H1 (cell line): ENCODE measurements at regions of chr4 and their contacts with region 1.

Region 1: DNA sequence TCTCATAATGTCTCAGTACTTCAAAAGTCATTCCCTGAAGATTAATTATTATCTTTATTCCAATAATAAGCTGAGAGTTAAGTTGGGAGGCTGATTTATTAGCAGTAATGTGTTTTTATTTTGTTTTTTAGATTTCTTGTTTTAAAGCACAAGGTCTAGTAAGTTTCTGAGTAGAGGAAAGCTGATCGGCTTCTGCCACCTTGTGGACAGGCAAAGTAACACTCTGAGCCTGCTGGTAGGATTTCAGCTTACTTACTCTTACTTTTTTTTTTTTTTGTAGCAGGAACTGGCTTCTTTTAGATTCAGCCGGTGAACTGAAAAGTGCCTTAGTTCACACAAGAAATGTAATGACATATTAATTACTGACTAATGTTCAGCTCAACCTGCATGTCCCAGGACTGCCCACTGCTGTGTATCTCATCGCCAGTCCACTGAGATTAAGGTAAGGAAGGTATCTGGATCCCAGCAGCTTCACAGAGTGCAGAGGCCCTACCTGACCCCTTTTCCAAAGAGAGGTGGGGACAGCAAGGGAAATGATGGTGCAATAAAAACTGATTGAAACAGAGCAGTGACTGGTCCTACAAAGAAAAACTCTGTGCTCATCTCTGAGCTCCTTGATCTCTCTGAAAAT is 126.5 kb downstream of the ADGRA3 start:
- DNase-seq: peak in 1 of 2 experiments; percentile 27
- H3K4me3 ChIP-seq: no peak overlapping the region
- H3K27ac ChIP-seq: no peak overlapping the region
- H3K4me1 ChIP-seq: no peaks in the 10 kb centered on the region
- H3K27me3 ChIP-seq: no peaks in the 10 kb centered on the region
- CTCF ChIP-seq: peak in 2 of 3 experiments; percentile 71 to 82; a peak in 3 of 4 replicates
- EP300 ChIP-seq: no peak
- POLR2A ChIP-seq: no peak
- RAD21 ChIP-seq: peak; percentile 91 to 92

Region 2: GRCh38 chr4:21790438-21791029 is 598.8 kb before region 1 on chr4:
- CTCF ChIA-PET with region 1: interaction called, 104 read pairs
- POLR2A ChIA-PET with region 1: no interaction called
- DNase-seq: no peak
- H3K4me3 ChIP-seq: no peak overlapping the region
- H3K27ac ChIP-seq: no peak overlapping the region
- H3K4me1 ChIP-seq: no peaks in the 10 kb centered on the region
- H3K27me3 ChIP-seq: no peaks in the 10 kb centered on the region
- CTCF ChIP-seq: peak in 2 of 3 experiments; percentile 14 to 25; a peak in 2 of 4 replicates
- EP300 ChIP-seq: no peak
- POLR2A ChIP-seq: no peak
- RAD21 ChIP-seq: peak; percentile 55 to 68

Region 3: DNA sequence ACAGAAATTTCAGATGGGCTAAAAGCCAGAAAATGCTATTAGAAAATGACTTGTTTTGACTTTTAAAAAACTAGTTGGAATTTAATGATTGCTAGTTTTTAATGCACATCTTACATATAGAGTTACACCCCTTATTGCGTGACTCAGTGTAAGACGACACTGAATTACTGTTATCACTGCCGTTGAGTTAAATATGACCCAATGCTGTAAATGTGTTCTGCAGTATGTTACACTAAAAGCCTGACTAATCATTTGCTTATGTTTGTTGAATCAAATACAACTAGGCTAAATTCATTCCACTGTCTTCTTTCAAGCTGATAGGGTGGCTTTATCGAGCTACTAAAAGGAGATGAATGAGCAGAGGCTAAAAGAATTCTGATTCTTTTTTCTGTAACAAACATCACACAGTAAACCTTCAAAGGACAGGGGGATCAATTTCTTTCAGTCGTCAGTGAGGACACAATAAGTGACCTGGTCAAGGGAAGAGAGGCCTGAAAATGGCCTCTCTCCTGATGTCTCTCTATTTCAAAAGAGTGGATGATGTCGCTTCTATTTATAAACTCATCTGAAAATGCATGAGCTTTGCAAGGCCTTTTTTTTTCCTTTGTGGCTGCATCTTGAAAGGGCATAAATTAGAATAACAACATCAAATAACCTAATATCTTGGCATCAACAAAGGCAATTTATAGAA is 298.5 kb before region 1 on chr4:
- CTCF ChIA-PET with region 1: interaction called, 15 read pairs
- POLR2A ChIA-PET with region 1: no interaction called
- DNase-seq: no peak
- H3K4me3 ChIP-seq: no peak overlapping the region
- H3K27ac ChIP-seq: no peak overlapping the region
- H3K4me1 ChIP-seq: no peaks in the 10 kb centered on the region
- H3K27me3 ChIP-seq: no peaks in the 10 kb centered on the region
- CTCF ChIP-seq: no peak
- EP300 ChIP-seq: no peak
- POLR2A ChIP-seq: no peak
- RAD21 ChIP-seq: no peak

Region 4: DNA sequence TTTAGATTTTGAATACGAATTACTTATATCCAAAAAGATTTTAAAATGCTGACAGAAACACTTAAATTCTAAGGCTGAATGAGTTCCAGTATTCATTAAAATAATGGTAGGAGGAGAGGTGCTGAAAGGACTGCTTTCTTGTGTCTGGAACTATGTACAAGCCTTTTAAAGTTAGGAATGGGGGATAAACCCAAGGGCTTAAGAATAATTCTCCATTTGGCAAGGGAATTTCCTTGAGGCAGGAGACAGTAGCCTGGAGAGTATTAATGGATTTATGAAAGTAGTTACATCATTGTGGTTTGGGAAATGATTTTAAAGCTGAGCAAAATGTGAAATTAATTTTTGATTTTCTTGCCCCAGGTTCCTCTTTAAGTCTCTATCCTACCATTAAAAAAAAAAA is 174.3 kb before region 1 on chr4:
- CTCF ChIA-PET with region 1: no interaction called
- POLR2A ChIA-PET with region 1: no interaction called
- DNase-seq: no peak
- H3K4me3 ChIP-seq: no peak overlapping the region
- H3K27ac ChIP-seq: no peak overlapping the region
- H3K4me1 ChIP-seq: no peaks in the 10 kb centered on the region
- H3K27me3 ChIP-seq: no peaks in the 10 kb centered on the region
- CTCF ChIP-seq: no peak
- EP300 ChIP-seq: no peak
- POLR2A ChIP-seq: no peak
- RAD21 ChIP-seq: no peak

Region 5: DNA sequence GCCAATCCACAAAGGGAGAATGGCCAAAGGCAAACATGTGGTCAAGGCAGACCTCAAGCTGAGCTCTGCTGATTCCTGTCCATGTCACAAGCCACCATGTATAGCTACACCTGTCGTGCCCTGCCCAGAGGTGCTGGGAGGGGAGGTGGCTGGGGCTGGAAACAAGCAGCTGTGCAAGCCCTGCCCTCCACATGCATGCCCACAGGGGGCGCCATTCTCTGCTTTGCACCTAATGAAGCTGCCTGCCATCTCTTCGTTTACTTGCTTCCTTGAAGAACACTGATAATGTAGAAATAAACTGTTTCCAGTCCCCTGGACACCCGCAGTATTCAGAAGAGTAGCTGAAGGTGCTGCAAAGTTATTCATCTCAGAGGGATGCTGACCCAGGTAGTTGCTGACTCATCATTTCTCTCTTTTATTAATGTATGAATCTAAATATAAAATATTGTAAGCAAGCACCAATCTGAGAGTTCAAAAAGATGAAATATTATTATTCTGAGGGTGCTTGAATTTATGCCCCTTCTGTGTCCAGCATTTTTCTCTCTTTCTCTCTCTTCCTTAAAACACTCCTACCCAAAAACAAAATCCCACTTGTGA is 152.1 kb before region 1 on chr4:
- CTCF ChIA-PET with region 1: interaction called, 85 read pairs
- POLR2A ChIA-PET with region 1: no interaction called
- DNase-seq: peak; percentile 43 to 94
- H3K4me3 ChIP-seq: no peak overlapping the region
- H3K27ac ChIP-seq: no peak overlapping the region
- H3K4me1 ChIP-seq: peaks cover 0 to 4% (median 0%) of the 10 kb centered on the region in 4 experiments; a peak in 1 of 7 replicates
- H3K27me3 ChIP-seq: no peaks in the 10 kb centered on the region
- CTCF ChIP-seq: peak; percentile 81 to 98 (median 97)
- EP300 ChIP-seq: no peak
- POLR2A ChIP-seq: no peak
- RAD21 ChIP-seq: peak; percentile 73 to 76

Region 6: GRCh38 chr4:22369901-22370562 is 19.3 kb before region 1 on chr4:
- CTCF ChIA-PET with region 1: interaction called, 17 read pairs
- POLR2A ChIA-PET with region 1: no interaction called
- DNase-seq: no peak
- H3K4me3 ChIP-seq: no peak overlapping the region
- H3K27ac ChIP-seq: no peak overlapping the region
- H3K4me1 ChIP-seq: no peaks in the 10 kb centered on the region
- H3K27me3 ChIP-seq: no peaks in the 10 kb centered on the region
- CTCF ChIP-seq: no peak
- EP300 ChIP-seq: no peak
- POLR2A ChIP-seq: no peak
- RAD21 ChIP-seq: no peak

Region 7: DNA sequence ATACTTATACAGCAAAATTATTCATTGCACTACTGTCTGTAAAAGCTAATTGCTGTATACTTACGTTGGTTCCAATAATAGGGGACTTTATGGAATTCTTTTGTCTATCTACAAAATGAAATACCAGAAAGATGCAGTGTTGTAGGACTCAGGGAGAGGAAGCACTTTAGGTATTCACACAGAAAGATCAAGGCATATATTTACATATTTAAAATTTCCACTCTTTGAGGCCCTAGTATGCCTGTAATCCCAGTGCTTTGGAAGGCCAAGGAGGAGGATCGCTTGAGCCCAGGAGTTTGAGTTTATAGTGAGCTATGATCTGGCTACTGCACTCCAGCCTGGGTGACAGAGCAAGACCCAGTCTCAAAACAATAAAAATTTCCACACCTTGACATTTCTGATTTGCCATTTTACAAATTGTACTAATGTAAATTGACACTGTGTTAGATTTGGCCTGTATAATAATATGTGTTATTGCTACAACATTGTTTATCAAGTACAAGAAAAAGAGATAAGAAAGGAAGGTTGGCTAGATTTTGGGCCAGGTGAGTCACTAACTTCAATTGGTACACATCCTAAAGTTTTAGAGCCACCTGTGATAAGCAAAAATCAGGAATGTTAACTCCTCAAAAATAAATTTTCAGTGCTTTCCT is 91.4 kb after region 1 on chr4:
- CTCF ChIA-PET with region 1: no interaction called
- POLR2A ChIA-PET with region 1: no interaction called
- DNase-seq: no peak
- H3K4me3 ChIP-seq: no peak overlapping the region
- H3K27ac ChIP-seq: no peak overlapping the region; the same call in 1 of the 2 replicates
- H3K4me1 ChIP-seq: peaks cover 0 to 8% (median 3%) of the 10 kb centered on the region in 4 experiments; a peak in 4 of 7 replicates
- H3K27me3 ChIP-seq: no peaks in the 10 kb centered on the region
- CTCF ChIP-seq: no peak
- EP300 ChIP-seq: no peak
- POLR2A ChIP-seq: no peak
- RAD21 ChIP-seq: no peak

Region 8: GRCh38 chr4:22490718-22491315 is 101.5 kb after region 1 on chr4:
- CTCF ChIA-PET with region 1: no interaction called
- POLR2A ChIA-PET with region 1: no interaction called
- DNase-seq: no peak
- H3K4me3 ChIP-seq: no peak overlapping the region
- H3K27ac ChIP-seq: 0 out of 2 replicates have a peak overlapping the region, but pooled peaks have one; percentile 20
- H3K4me1 ChIP-seq: peaks cover 0 to 13% (median 8%) of the 10 kb centered on the region in 4 experiments; a peak in 4 of 7 replicates
- H3K27me3 ChIP-seq: no peaks in the 10 kb centered on the region
- CTCF ChIP-seq: no peak
- EP300 ChIP-seq: no peak
- POLR2A ChIP-seq: no peak
- RAD21 ChIP-seq: no peak

Region 9: DNA sequence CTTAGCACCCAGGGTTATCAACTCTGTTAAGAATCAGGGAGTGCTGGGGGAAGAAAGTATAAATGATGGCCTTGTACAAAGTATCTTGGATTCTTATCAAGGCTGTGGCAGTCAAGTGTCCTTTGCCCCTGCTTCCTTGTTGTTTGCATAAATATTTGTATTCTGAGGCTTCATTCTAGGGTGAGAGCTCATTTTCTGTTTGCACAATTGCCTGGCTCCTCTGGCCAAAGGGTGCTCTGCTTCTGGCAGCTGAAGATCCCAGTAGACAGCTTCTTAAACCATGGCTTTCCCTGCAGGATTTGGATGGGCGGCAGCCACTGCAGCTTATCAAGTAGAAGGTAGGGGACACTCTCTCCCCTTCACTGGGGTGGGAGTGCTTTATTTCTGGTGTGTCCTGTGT is 303.4 kb after region 1 on chr4 and contains the start of gene GBA3:
- CTCF ChIA-PET with region 1: interaction called, 27 read pairs
- POLR2A ChIA-PET with region 1: no interaction called
- DNase-seq: no peak
- H3K4me3 ChIP-seq: no peak within 1 kb of the TSS
- H3K27ac ChIP-seq: no peak within 1 kb of the TSS
- H3K4me1 ChIP-seq: no peaks in the 10 kb centered on the region
- H3K27me3 ChIP-seq: no peaks in the 10 kb centered on the region
- CTCF ChIP-seq: peak in 2 of 3 experiments; percentile 23 to 30; a peak in 2 of 4 replicates
- EP300 ChIP-seq: no peak
- POLR2A ChIP-seq: no peak
- RAD21 ChIP-seq: peak; percentile 50 to 60
- total RNA-seq, gene GBA3: not detected in 2 replicates